Thyroid gland (tissue), 4 donors: ENCODE measurements at regions of chr13 and their contacts with region 1.

Region 1: GRCh38 chr13:21603531-21604448 is at the start of gene MICU2:
- DNase-seq: peak; percentile 92 to 95
- H3K4me3 ChIP-seq: peak within 1 kb of the TSS; percentile 28 to 86 (median 70)
- H3K27ac ChIP-seq: peak within 1 kb of the TSS; percentile 77 to 99 (median 89)
- H3K4me1 ChIP-seq: peaks cover 0 to 6% of the 10 kb centered on the region in 2 donors
- H3K27me3 ChIP-seq: no peaks in the 10 kb centered on the region
- CTCF ChIP-seq: peak in 1 of 6 experiments; percentile 27
- POLR2A ChIP-seq: peak; percentile 25 to 97
- total RNA-seq, gene MICU2: 55.3 to 127 (median 92.9) TPM

Region 2: DNA sequence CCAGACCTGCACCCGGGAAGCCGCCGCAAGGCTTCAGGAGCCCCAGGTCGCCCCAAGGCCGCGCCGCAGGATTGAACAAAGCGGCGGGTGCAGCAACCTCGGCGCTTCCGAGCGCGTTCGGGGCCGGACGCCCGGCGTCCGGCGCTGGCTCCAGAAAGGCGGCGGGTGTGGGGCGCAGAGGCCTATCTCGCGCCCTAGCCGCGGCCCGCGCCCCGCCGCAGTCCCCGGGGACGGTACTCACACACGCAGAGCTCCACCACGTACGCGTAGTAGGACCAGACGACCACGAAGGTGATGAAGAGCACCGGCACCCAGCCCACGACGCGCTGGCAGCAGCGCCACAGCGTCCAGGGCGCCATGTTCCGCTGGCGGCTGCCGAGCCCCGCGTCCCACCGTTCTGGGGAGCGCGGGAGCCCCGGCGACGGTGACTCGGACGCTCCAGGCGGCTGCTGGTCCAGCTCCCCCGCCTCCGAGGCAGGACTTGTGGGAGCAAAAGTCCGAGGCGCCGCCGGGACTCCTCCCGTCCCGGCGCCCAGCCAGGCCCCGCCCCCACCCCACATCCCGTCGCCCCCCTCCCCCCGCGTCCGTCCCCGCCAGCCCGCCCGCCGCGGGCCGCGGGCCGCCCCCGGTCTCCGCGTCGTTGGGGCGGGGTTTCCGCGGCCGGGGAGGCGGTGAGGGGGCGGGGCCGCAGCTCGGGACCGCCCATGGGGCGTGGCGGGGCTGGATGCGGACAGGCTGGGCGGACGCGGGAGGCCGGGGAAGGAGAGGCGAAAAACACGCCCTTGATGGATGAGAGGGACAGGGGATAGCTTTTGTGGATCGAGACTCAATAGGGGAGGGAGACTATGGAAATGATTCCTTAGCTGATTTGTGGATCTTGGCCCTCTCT is 144.7 kb before region 1 on chr13 and contains the start of gene ZDHHC20:
- intact Hi-C with region 1: loop called (anchors 10 kb)
- DNase-seq: peak; percentile 86 to 90
- H3K4me3 ChIP-seq: peak within 1 kb of the TSS; percentile 94 to 98 (median 97)
- H3K27ac ChIP-seq: peak within 1 kb of the TSS; percentile 84 to 93 (median 91)
- H3K4me1 ChIP-seq: peaks cover 0 to 12% of the 10 kb centered on the region in 2 donors
- H3K27me3 ChIP-seq: no peaks in the 10 kb centered on the region
- CTCF ChIP-seq: no peak
- POLR2A ChIP-seq: peak in 1 of 2 donors; percentile 88
- total RNA-seq, gene ZDHHC20: 75.8 to 90.2 (median 79.3) TPM

Region 3: GRCh38 chr13:21546372-21546771 is 57.4 kb before region 1 on chr13:
- intact Hi-C with region 1: no loop called
- DNase-seq: no peak
- H3K4me3 ChIP-seq: no peak overlapping the region
- H3K27ac ChIP-seq: no peak overlapping the region
- H3K4me1 ChIP-seq: peaks cover 5 to 10% of the 10 kb centered on the region in 2 donors
- H3K27me3 ChIP-seq: no peaks in the 10 kb centered on the region
- CTCF ChIP-seq: no peak
- POLR2A ChIP-seq: no peak